ENCODE measurements at regions of chr9 and their contacts with region 1.

Region 1: DNA sequence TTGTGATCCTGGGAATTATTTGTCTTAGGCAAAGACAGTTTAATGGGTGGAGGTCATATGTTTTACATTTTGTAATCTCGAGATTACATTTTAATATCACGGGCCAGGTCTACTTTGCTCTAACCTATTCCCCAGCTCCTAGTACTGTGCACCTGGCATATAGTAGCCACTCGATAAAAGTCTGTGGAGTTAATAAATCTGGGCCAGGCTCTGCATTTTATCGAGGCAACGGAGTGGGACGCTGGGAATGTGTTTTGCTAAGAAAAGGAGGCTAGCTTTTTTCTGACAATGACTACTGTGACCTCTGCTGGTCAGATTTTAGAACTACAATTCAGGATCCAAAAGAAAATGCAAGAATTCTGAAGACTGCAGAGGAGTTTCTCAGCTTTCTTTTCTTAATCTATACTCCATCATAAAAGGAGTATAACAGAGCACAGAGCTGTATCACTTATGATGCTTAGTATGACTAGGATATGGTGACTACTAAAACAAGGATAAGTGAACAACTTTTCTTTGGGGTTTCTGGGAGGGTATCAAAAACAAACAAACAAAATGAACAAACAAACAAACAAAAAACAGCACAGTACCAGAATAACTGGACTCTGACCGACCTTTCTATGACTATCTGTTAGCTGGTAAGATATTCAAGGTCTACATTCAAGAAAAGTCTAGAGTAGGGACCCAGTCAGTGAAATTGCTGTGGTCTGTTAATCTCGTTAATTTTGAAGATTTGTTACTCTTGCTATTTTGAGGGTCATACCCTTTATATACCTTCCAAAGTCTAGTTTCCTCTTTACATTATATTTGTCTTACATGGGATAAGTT is 46.1 kb upstream of the CER1 start:
- DNase-seq: peak; percentile 21
- ATAC-seq: peak; percentile 41

Region 2: GRCh38 chr9:14056316-14056861 is 712.2 kb before region 1 on chr9:
- intact Hi-C with region 1: no loop called
- DNase-seq: no peak
- ATAC-seq: peak; percentile 52

Region 3: DNA sequence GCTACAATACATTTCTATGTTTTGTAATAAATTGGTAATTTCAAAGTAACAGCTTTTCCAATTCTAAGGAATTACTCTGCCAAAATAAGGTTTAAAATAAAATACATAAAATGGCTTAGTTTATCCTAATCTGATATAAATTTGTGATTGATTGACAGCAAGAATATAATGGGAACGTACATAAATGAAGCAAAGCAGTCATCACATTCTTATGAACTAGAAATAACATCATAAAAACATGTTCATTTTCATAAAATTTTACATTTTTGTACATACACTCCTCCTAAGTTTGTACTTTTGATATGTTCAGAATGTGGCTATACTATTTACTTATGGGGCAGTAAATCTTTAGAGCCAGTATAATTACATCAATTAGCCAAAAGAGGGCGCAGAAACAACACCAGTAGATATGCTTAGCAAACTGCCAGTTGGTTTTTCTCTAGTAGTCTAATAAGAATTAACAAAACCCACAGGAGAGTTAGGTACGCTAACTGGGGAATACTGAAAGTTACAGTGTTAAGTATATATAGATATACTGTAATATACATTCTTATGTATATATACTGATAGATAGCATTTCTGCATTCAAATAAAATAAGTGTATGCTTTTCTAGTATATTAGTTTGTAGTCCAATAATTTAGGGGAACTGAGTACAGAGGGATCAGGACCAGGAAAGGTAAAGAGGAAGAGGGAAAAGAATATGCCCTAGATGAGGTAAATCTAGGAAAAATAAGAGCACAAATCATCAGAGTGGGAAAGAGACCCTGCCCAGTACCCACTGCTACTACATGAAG is 152.2 kb before region 1 on chr9:
- intact Hi-C with region 1: loop called (anchors 5 kb)
- DNase-seq: no peak
- ATAC-seq: peak; percentile 55